ENCODE measurements at regions of chr6 and their contacts with region 1.

Region 1: GRCh38 chr6:28355743-28356665 is 6.3 kb downstream of the ZKSCAN3 start:
- DNase-seq: peak; percentile 61
- H3K4me3 Mint-ChIP-seq: peak overlapping the region; percentile 85
- H3K27ac Mint-ChIP-seq: no peak overlapping the region
- H3K4me1 Mint-ChIP-seq: peaks cover 18% of the 10 kb centered on the region
- H3K27me3 Mint-ChIP-seq: no peaks in the 10 kb centered on the region

Region 2: GRCh38 chr6:27902335-27903314 is 453.4 kb before region 1 on chr6:
- CTCF ChIA-PET with region 1: interaction called, 4 read pairs
- POLR2A ChIA-PET with region 1: no interaction called
- intact Hi-C with region 1: loop called (anchors 5 kb)
- DNase-seq: peak; percentile 92
- H3K4me3 Mint-ChIP-seq: peak overlapping the region; percentile 79
- H3K27ac Mint-ChIP-seq: peak overlapping the region; percentile 91
- H3K4me1 Mint-ChIP-seq: peaks cover 11% of the 10 kb centered on the region
- H3K27me3 Mint-ChIP-seq: peaks cover 13% of the 10 kb centered on the region

Region 3: GRCh38 chr6:28124102-28124970 is 231.7 kb before region 1 on chr6 and contains the start of gene ZSCAN16:
- CTCF ChIA-PET with region 1: interaction called, 16 read pairs
- POLR2A ChIA-PET with region 1: no interaction called
- intact Hi-C with region 1: no loop called
- DNase-seq: peak; percentile 84
- H3K4me3 Mint-ChIP-seq: peak within 1 kb of the TSS; percentile 91
- H3K27ac Mint-ChIP-seq: peak within 1 kb of the TSS; percentile 91
- H3K4me1 Mint-ChIP-seq: peaks cover 34% of the 10 kb centered on the region
- H3K27me3 Mint-ChIP-seq: no peaks in the 10 kb centered on the region
- total RNA-seq, gene ZSCAN16: 2.8 to 3.6 TPM

Region 4: GRCh38 chr6:28212510-28213212 is 143.3 kb before region 1 on chr6:
- CTCF ChIA-PET with region 1: interaction called, 5 read pairs
- POLR2A ChIA-PET with region 1: no interaction called
- intact Hi-C with region 1: loop called (anchors 5 kb)
- DNase-seq: peak; percentile 80
- H3K4me3 Mint-ChIP-seq: peak overlapping the region; percentile 75
- H3K27ac Mint-ChIP-seq: peak overlapping the region; percentile 59
- H3K4me1 Mint-ChIP-seq: peaks cover 19% of the 10 kb centered on the region
- H3K27me3 Mint-ChIP-seq: peaks cover 67% of the 10 kb centered on the region

Region 5: GRCh38 chr6:28266962-28267694 is 88.9 kb before region 1 on chr6 and contains the start of gene ZSCAN26:
- CTCF ChIA-PET with region 1: interaction called, 13 read pairs
- POLR2A ChIA-PET with region 1: no interaction called
- intact Hi-C with region 1: no loop called
- DNase-seq: peak; percentile 89
- H3K4me3 Mint-ChIP-seq: no peak within 1 kb of the TSS
- H3K27ac Mint-ChIP-seq: no peak within 1 kb of the TSS
- H3K4me1 Mint-ChIP-seq: peaks cover 36% of the 10 kb centered on the region
- H3K27me3 Mint-ChIP-seq: no peaks in the 10 kb centered on the region
- total RNA-seq, gene ZSCAN26: 6.0 to 6.4 TPM

Region 6: GRCh38 chr6:28542440-28543296 is 186.7 kb after region 1 on chr6:
- CTCF ChIA-PET with region 1: no interaction called
- POLR2A ChIA-PET with region 1: no interaction called
- intact Hi-C with region 1: no loop called
- DNase-seq: peak; percentile 75
- H3K4me3 Mint-ChIP-seq: peak overlapping the region; percentile 79
- H3K27ac Mint-ChIP-seq: peak overlapping the region; percentile 60
- H3K4me1 Mint-ChIP-seq: peaks cover 19% of the 10 kb centered on the region
- H3K27me3 Mint-ChIP-seq: peaks cover 29% of the 10 kb centered on the region

Measured in activated CD4-positive, alpha-beta memory T cell treated with anti-CD3 and anti-CD28 coated beads for 36 hours (primary cell).